PC-3 (cell line): ENCODE measurements at regions of chr11 and their contacts with region 1.

Region 1: GRCh38 chr11:111926505-111927391 is 8.0 kb downstream of the C11orf52 start:
- DNase-seq: peak; percentile 99
- ATAC-seq: peak; percentile 92
- H3K4me3 ChIP-seq: peak overlapping the region; percentile 69
- H3K27ac ChIP-seq: peak overlapping the region; percentile 17
- H3K4me1 ChIP-seq: peaks cover 25% of the 10 kb centered on the region
- H3K27me3 ChIP-seq: no peaks in the 10 kb centered on the region
- CTCF ChIP-seq: no peak

Region 2: GRCh38 chr11:111886844-111887243 is 39.9 kb before region 1 on chr11:
- CTCF ChIA-PET with region 1: no interaction called
- POLR2A ChIA-PET with region 1: no interaction called
- intact Hi-C with region 1: no loop called
- DNase-seq: no peak
- ATAC-seq: no peak
- H3K4me3 ChIP-seq: no peak overlapping the region
- H3K27ac ChIP-seq: no peak overlapping the region
- H3K4me1 ChIP-seq: no peaks in the 10 kb centered on the region
- H3K27me3 ChIP-seq: no peaks in the 10 kb centered on the region
- CTCF ChIP-seq: no peak

Region 3: GRCh38 chr11:111960916-111961315 is 34.2 kb after region 1 on chr11:
- CTCF ChIA-PET with region 1: interaction called, 12 read pairs
- POLR2A ChIA-PET with region 1: no interaction called
- intact Hi-C with region 1: no loop called
- DNase-seq: peak; percentile 94
- ATAC-seq: peak; percentile 97
- H3K4me3 ChIP-seq: no peak overlapping the region
- H3K27ac ChIP-seq: peak overlapping the region; percentile 82
- H3K4me1 ChIP-seq: peaks cover 16% of the 10 kb centered on the region
- H3K27me3 ChIP-seq: no peaks in the 10 kb centered on the region
- CTCF ChIP-seq: no peak

Region 4: DNA sequence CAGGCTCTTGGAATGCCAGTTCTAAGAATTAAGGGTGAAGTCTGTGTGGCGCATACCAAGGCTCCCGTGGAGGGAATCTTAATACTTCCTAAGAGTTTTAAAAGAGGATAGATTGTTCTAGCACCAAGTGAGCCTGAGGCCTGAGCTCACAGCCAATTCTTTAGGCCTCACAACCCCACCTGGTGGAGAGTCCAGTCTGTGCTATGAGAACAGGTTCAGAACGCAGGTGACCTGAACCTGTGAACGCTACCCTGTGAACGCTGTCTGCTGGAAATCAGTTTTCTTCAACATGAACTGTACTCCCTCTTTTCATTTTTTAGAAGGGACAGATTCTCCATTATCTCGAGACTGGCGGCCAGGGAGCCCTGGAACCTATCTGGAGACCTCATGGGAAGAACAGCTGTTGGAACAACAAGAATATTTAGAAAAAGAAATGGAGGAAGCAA is 55.3 kb after region 1 on chr11:
- CTCF ChIA-PET with region 1: interaction called, 18 read pairs
- POLR2A ChIA-PET with region 1: interaction called, 10 read pairs
- intact Hi-C with region 1: loop called (anchors 1 kb)
- DNase-seq: peak; percentile 84
- ATAC-seq: peak; percentile 57
- H3K4me3 ChIP-seq: no peak overlapping the region
- H3K27ac ChIP-seq: peak overlapping the region; percentile 24
- H3K4me1 ChIP-seq: peaks cover 35% of the 10 kb centered on the region
- H3K27me3 ChIP-seq: no peaks in the 10 kb centered on the region
- CTCF ChIP-seq: peak; percentile 90

Region 5: DNA sequence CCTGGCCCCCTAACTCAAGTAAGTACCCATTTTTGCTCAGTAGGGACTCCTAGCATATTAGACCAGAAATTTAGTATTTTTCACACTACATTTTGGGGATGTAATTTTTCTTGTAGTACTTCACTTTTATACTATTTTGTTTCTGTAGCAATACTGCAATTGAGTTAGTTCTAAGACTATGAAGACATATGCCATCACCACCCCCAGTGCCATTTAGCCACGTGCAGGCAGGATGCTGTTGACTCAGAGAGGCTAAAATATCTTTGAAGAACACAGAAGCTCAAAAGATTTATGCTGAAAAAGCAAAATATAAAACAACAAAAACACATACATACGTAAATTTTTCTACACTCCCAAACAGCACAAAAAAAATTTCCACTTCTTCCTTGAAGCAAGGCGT is 69.4 kb after region 1 on chr11:
- CTCF ChIA-PET with region 1: no interaction called
- POLR2A ChIA-PET with region 1: no interaction called
- intact Hi-C with region 1: loop called (anchors 1 kb)
- DNase-seq: no peak
- ATAC-seq: no peak
- H3K4me3 ChIP-seq: no peak overlapping the region
- H3K27ac ChIP-seq: no peak overlapping the region
- H3K4me1 ChIP-seq: no peaks in the 10 kb centered on the region
- H3K27me3 ChIP-seq: no peaks in the 10 kb centered on the region
- CTCF ChIP-seq: no peak